ENCODE measurements at regions of chr18 and their contacts with region 1.

Region 1: DNA sequence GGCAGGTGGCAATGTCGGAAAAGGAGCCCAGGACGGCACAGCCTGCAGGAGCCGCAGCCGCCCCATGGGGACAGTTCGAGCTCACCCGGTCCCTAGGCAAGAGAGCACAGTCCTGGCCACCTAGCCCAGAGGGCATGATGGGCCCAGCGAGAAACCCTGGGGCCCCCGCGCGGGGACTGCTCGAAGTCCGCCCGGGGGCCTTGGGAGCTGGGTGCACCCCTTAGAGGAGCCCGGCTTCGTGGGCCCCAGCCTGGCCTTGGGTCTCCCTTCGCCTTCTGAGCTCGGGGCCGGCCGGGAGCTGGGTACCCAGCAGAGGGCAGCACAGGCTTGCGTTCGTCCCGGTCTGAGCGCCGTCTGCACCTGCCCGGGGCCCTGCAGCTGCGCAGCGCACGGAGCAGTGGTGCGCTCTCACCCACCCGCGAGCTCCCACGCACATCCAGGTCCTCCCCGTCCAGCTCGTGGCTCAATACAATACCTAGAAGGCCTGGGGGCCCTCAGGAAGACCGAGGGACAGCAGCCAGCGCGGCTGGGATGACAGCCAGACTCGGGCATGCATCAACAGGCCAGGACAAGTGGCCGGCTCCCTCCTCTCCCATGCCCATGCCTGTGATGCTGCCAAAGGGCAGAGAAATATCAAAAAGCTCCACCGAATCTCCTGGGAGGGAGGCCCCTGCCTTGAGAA is 96.2 kb upstream of the ZNF532 start:
- DNase-seq: peak; percentile 83
- ATAC-seq: peak; percentile 92
- H3K4me3 Mint-ChIP-seq: no peak overlapping the region
- H3K27ac Mint-ChIP-seq: no peak overlapping the region
- H3K4me1 Mint-ChIP-seq: peaks cover 5% of the 10 kb centered on the region
- H3K27me3 Mint-ChIP-seq: peaks cover 42% of the 10 kb centered on the region
- CTCF ChIP-seq: peak; percentile 65

Region 2: DNA sequence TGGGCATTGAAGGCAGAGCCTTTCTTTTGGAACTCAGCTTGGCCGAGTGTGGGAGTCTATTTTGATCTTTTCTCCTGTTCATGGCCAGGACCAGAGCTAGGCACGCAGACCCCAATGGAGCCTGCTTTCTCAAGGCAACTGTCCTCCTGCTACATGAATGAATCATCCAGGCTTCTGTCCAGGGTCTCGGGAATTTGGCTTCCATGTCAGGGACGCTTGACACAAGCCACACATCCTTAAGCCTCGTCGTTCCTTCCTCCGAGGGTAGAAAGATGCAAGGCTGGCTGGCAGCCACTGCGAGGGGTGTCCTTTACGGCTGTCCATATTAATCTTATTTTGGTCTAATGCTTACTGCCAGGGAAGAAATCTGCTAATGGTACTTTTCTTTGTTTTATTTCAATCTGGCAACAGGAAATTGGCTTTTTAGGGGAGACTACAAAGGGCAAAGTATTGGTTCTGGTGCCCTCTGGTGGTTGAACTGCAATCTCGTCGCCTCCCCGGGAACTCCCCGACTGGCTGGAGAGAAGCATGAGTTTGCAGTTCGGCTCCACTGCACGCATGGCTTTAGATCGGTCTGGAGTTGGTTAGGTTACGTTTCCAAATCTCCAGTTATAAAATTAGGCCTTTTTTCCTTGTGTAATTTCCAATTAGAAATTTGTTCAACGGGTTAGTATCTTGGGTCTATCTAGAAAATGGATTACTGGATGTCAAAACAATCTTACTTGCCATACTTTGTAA is 274.7 kb before region 1 on chr18:
- CTCF ChIA-PET with region 1: interaction called, 39 read pairs
- POLR2A ChIA-PET with region 1: no interaction called
- intact Hi-C with region 1: no loop called
- DNase-seq: peak; percentile 82
- ATAC-seq: peak; percentile 98
- H3K4me3 Mint-ChIP-seq: no peak overlapping the region
- H3K27ac Mint-ChIP-seq: no peak overlapping the region
- H3K4me1 Mint-ChIP-seq: peaks cover 6% of the 10 kb centered on the region
- H3K27me3 Mint-ChIP-seq: peaks cover 21% of the 10 kb centered on the region
- CTCF ChIP-seq: peak; percentile 95

Region 3: GRCh38 chr18:58520969-58521368 is 247.5 kb before region 1 on chr18:
- CTCF ChIA-PET with region 1: interaction called, 405 read pairs
- POLR2A ChIA-PET with region 1: interaction called, 3 read pairs
- intact Hi-C with region 1: no loop called
- DNase-seq: peak; percentile 45
- ATAC-seq: peak; percentile 66
- H3K4me3 Mint-ChIP-seq: no peak overlapping the region
- H3K27ac Mint-ChIP-seq: no peak overlapping the region
- H3K4me1 Mint-ChIP-seq: peaks cover 22% of the 10 kb centered on the region
- H3K27me3 Mint-ChIP-seq: peaks cover 4% of the 10 kb centered on the region
- CTCF ChIP-seq: no peak

Region 4: GRCh38 chr18:58671111-58671631 is 97.3 kb before region 1 on chr18 and contains the start of gene MALT1:
- CTCF ChIA-PET with region 1: interaction called, 20 read pairs
- POLR2A ChIA-PET with region 1: no interaction called
- intact Hi-C with region 1: loop called (anchors 10 kb)
- DNase-seq: peak; percentile 94
- ATAC-seq: peak; percentile 92
- H3K4me3 Mint-ChIP-seq: peak within 1 kb of the TSS; percentile 93
- H3K27ac Mint-ChIP-seq: peak within 1 kb of the TSS; percentile 95
- H3K4me1 Mint-ChIP-seq: peaks cover 60% of the 10 kb centered on the region
- H3K27me3 Mint-ChIP-seq: no peaks in the 10 kb centered on the region
- CTCF ChIP-seq: no peak
- total RNA-seq, gene MALT1: 57.8 to 67.5 TPM

Region 5: GRCh38 chr18:58745914-58746313 is 22.5 kb before region 1 on chr18:
- CTCF ChIA-PET with region 1: interaction called, 85 read pairs
- POLR2A ChIA-PET with region 1: no interaction called
- intact Hi-C with region 1: no loop called
- DNase-seq: no peak
- ATAC-seq: no peak
- H3K4me3 Mint-ChIP-seq: no peak overlapping the region
- H3K27ac Mint-ChIP-seq: no peak overlapping the region
- H3K4me1 Mint-ChIP-seq: peaks cover under 1% of the 10 kb centered on the region
- H3K27me3 Mint-ChIP-seq: no peaks in the 10 kb centered on the region
- CTCF ChIP-seq: no peak

Region 6: GRCh38 chr18:59070181-59070912 is 301.9 kb after region 1 on chr18:
- CTCF ChIA-PET with region 1: interaction called, 76 read pairs
- POLR2A ChIA-PET with region 1: no interaction called
- intact Hi-C with region 1: no loop called
- DNase-seq: peak; percentile 89
- ATAC-seq: peak; percentile 96
- H3K4me3 Mint-ChIP-seq: no peak overlapping the region
- H3K27ac Mint-ChIP-seq: no peak overlapping the region
- H3K4me1 Mint-ChIP-seq: no peaks in the 10 kb centered on the region
- H3K27me3 Mint-ChIP-seq: peaks cover 2% of the 10 kb centered on the region
- CTCF ChIP-seq: peak; percentile 81

Measured in activated CD8-positive, alpha-beta T cell treated with anti-CD3 and anti-CD28 coated beads for 36 hours (primary cell).